ENCODE measurements at regions of chr7 and their contacts with region 1.

Region 1: DNA sequence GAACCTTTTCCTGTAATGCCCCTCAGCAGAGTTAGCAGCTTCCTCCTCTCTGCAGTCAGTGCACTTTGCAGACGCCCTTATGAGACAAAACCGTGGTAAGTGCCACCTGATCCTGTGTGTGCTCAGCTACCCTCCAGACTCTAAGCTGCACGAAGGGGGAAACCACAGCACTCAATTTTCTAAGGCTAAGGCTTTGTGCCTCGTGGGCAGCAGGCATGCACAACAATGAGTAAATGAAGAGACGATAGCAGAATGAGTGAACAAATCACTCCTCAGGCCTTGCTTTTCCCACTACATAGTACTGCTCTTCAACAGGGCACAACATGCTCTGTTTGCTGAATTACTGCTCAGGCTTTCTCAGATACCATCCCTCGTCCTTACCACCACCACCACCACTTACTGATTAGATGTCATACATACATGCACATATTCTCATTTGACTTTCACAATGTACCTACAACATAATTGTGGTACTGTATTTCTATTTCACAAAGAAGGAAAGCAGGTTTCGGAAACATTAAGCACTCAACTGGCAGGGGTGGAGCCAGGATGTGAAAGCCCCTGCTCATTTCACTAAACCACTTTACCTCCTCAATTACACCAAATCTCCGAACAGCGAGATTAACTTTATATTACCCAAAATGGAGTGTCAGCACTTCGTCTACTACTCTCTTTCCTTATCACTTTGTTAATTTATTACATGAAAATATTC is 85.4 kb downstream of the ICA1 start:
- DNase-seq: peak; percentile 78
- H3K4me3 Mint-ChIP-seq: peak overlapping the region; percentile 47
- H3K27ac Mint-ChIP-seq: peak overlapping the region; percentile 83
- H3K4me1 Mint-ChIP-seq: peaks cover 43% of the 10 kb centered on the region
- H3K27me3 Mint-ChIP-seq: no peaks in the 10 kb centered on the region

Region 2: GRCh38 chr7:7640221-7641128 is 536.1 kb before region 1 on chr7 and contains the start of gene UMAD1:
- CTCF ChIA-PET with region 1: no interaction called
- intact Hi-C with region 1: loop called (anchors 1 kb)
- DNase-seq: peak; percentile 99
- H3K4me3 Mint-ChIP-seq: peak within 1 kb of the TSS; percentile 92
- H3K27ac Mint-ChIP-seq: peak within 1 kb of the TSS; percentile 98
- H3K4me1 Mint-ChIP-seq: peaks cover 41% of the 10 kb centered on the region
- H3K27me3 Mint-ChIP-seq: no peaks in the 10 kb centered on the region
- total RNA-seq, gene UMAD1: 13.8 to 14.3 TPM

Region 3: GRCh38 chr7:7772397-7772821 is 404.1 kb before region 1 on chr7:
- CTCF ChIA-PET with region 1: no interaction called
- intact Hi-C with region 1: loop called (anchors 2 kb)
- DNase-seq: peak; percentile 53
- H3K4me3 Mint-ChIP-seq: peak overlapping the region; percentile 69
- H3K27ac Mint-ChIP-seq: no peak overlapping the region
- H3K4me1 Mint-ChIP-seq: peaks cover 28% of the 10 kb centered on the region
- H3K27me3 Mint-ChIP-seq: no peaks in the 10 kb centered on the region

Region 4: GRCh38 chr7:8042796-8043535 is 133.6 kb before region 1 on chr7:
- CTCF ChIA-PET with region 1: no interaction called
- intact Hi-C with region 1: loop called (anchors 1 kb)
- DNase-seq: no peak
- H3K4me3 Mint-ChIP-seq: no peak overlapping the region
- H3K27ac Mint-ChIP-seq: peak overlapping the region; percentile 82
- H3K4me1 Mint-ChIP-seq: peaks cover 72% of the 10 kb centered on the region
- H3K27me3 Mint-ChIP-seq: no peaks in the 10 kb centered on the region

Region 5: GRCh38 chr7:8120390-8121058 is 56.0 kb before region 1 on chr7:
- CTCF ChIA-PET with region 1: no interaction called
- intact Hi-C with region 1: no loop called
- DNase-seq: no peak
- H3K4me3 Mint-ChIP-seq: no peak overlapping the region
- H3K27ac Mint-ChIP-seq: no peak overlapping the region
- H3K4me1 Mint-ChIP-seq: peaks cover 40% of the 10 kb centered on the region
- H3K27me3 Mint-ChIP-seq: no peaks in the 10 kb centered on the region

Region 6: DNA sequence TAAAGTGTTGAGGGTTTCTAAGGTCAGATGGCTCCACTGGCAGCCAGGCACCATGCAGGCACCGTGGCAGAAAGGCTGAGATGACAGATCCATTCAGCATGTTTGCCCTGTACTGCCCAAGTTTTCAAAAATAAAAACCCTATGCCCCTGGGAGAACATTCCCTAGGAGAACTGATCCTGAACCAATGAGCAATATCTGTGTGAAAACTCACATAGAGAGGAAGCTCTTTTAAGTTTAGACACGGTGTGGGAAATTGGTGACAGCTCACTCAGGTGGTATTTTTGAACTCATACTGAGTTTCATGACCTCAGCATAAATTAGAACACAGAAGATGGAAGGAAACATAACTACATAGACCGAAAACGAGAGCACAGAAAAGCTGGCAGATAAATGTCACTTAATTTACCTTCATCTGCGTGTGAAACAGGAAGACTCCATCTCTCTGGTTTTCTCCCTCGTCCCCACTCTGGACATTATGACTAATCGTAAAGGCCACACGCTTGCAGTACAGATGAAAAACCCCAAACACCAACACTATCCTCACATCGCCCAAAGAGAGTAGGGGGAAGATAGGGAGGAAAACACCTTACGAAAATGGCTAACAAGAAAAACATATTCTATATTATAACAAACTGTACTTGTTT is 42.3 kb before region 1 on chr7:
- CTCF ChIA-PET with region 1: no interaction called
- intact Hi-C with region 1: loop called (anchors 1 kb)
- DNase-seq: peak; percentile 71
- H3K4me3 Mint-ChIP-seq: peak overlapping the region; percentile 33
- H3K27ac Mint-ChIP-seq: peak overlapping the region; percentile 68
- H3K4me1 Mint-ChIP-seq: peaks cover 52% of the 10 kb centered on the region
- H3K27me3 Mint-ChIP-seq: no peaks in the 10 kb centered on the region